Activated CD8-positive, alpha-beta memory T cell treated with anti-CD3 and anti-CD28 coated beads, Interleukin-2, amount 10 ng/mL, durations not matched to agents 7 days and 5 days (primary cell): ENCODE measurements at regions of chr6 and their contacts with region 1.

Region 1: DNA sequence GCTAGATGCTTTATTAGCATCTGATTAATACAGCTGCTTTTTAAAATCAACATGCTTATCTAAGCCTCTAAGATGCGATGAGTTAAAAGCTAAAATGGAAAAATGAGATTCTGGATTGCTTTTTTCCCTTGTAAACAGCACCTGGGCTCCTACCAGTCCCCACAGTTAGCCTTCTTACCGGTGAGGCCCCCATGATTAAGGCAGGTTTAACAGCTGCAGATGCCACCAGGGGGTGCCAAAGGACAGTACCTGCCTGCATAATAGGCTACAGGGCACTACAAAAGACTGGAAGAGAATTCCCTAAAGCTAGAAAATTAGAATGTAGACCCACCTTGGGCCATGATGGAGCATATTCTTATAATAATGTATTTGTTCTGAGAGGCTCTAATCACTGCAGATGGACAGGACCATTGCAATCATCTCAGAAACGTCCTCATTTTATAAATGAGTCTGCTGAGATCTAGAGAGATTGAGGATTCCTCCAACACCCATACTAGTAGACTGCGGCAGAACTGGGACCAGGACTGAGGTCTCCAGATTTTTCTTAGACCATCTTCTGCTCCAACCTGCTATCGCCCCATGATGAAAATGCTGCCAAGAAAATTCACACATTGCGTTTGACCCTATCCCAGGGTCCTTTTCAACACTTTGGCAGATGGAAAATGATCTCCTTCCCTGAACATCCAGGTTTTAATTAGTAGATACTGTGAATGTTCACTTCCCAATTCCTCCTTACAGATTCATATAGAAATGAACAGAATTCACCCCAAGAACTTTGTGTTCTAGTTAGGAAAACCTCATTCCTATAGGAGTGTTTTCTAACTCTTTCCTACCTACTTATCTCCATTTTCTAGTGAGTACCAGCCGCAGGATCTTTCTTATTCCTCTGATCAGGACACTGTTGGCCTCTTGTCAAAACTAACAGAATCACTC is 148.8 kb downstream of the RPS12 start:
- DNase-seq: peak; percentile 76
- ATAC-seq: peak; percentile 87
- H3K4me3 Mint-ChIP-seq: no peak overlapping the region
- H3K27ac Mint-ChIP-seq: no peak overlapping the region
- H3K4me1 Mint-ChIP-seq: peaks cover 28% of the 10 kb centered on the region
- H3K27me3 Mint-ChIP-seq: peaks cover 37% of the 10 kb centered on the region

Region 2: GRCh38 chr6:132768051-132768517 is 195.1 kb before region 1 on chr6:
- CTCF ChIA-PET with region 1: no interaction called
- DNase-seq: peak; percentile 60
- ATAC-seq: peak; percentile 75
- H3K4me3 Mint-ChIP-seq: no peak overlapping the region
- H3K27ac Mint-ChIP-seq: no peak overlapping the region
- H3K4me1 Mint-ChIP-seq: peaks cover 19% of the 10 kb centered on the region
- H3K27me3 Mint-ChIP-seq: no peaks in the 10 kb centered on the region

Region 3: GRCh38 chr6:132820629-132821381 is 142.4 kb before region 1 on chr6:
- CTCF ChIA-PET with region 1: interaction called, 22 read pairs
- DNase-seq: no peak
- ATAC-seq: peak; percentile 9
- H3K4me3 Mint-ChIP-seq: no peak overlapping the region
- H3K27ac Mint-ChIP-seq: no peak overlapping the region
- H3K4me1 Mint-ChIP-seq: peaks cover 38% of the 10 kb centered on the region
- H3K27me3 Mint-ChIP-seq: no peaks in the 10 kb centered on the region

Region 4: GRCh38 chr6:132952031-132952867 is 11.0 kb before region 1 on chr6:
- CTCF ChIA-PET with region 1: interaction called, 11 read pairs
- DNase-seq: no peak
- ATAC-seq: no peak
- H3K4me3 Mint-ChIP-seq: no peak overlapping the region
- H3K27ac Mint-ChIP-seq: no peak overlapping the region
- H3K4me1 Mint-ChIP-seq: no peaks in the 10 kb centered on the region
- H3K27me3 Mint-ChIP-seq: peaks cover 65% of the 10 kb centered on the region